Cardiac septum (tissue), 1 donor: ENCODE measurements at regions of chr4 and their contacts with region 1.

Region 1: DNA sequence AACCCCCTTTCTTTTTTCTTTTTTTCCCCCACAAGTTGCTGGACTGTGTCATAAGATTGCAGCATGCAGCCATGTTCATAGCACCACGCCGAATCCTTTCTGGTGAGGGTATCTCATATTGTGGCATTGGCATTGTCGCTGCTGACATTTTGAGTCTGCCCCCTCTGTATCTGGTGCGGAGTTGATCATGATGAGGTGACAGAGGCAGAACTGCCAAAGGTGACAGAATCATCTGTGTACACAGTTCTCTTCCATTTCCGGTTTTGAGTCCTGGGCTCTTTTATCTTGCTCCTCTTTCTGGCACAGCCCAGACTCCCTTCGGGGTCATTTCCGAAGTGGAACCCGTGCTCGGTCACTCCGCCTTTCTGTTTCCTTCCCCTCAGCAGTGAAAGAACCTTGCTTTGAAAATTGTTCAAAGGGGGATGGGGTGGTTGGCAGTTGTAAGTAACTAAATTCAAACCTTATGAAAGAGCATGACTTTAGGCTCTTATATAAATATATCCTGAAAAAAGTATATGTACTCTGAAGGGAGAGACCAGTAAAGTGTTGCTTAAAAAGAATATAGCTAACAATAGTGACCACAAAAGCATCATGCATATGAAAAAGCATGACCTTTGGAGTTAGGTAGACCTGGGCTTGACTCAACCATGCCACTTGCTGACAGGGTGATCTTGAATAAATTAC is 55.0 kb upstream of the BMP2K start:
- DNase-seq: no peak

Region 2: GRCh38 chr4:77959566-77960338 is 761.4 kb before region 1 on chr4:
- intact Hi-C with region 1: no loop called
- DNase-seq: no peak

Region 3: DNA sequence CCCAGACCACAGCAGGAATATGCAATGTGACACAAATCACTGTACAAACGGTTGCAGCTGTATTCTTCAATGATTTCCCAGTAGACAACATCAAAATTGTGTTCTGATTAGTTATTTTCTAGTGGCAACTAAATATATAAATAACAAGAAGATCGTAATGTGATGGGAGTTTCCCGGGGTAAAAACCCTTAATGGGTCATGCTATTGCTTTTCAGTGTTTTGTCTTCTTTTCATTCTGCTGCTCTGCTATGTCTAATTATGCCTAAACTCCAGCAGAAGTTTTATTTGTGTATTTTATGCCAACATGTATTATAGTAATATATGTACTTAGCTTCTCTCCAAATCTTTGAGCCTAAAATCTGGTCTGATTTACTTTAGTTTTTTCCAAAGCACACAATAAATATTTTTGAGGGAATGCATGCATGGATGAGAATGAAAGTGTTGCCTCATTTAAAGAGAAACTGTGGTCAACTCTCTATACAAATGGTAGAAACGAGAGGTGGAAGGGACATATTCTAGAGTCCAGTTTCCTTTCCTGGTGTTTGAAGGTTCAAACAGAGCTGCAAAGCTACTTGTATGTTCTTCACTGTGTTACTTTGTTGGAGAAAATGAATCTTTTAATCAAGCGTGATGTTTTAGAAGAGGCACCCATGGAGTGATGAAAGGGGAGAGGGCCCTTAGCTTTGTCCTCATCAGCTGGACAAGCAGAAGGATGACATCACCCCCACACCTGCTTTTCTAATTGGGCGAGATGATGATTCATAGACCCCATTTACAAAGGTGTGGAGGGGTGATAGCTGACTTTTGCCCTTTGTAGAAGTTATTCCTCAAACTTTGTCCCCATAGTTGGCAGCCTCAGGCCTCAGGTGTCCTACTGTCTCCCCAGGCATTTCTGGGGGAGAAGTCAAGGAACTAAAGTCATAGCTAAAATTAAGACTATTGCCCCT is 534.3 kb before region 1 on chr4:
- intact Hi-C with region 1: no loop called
- DNase-seq: no peak

Region 4: DNA sequence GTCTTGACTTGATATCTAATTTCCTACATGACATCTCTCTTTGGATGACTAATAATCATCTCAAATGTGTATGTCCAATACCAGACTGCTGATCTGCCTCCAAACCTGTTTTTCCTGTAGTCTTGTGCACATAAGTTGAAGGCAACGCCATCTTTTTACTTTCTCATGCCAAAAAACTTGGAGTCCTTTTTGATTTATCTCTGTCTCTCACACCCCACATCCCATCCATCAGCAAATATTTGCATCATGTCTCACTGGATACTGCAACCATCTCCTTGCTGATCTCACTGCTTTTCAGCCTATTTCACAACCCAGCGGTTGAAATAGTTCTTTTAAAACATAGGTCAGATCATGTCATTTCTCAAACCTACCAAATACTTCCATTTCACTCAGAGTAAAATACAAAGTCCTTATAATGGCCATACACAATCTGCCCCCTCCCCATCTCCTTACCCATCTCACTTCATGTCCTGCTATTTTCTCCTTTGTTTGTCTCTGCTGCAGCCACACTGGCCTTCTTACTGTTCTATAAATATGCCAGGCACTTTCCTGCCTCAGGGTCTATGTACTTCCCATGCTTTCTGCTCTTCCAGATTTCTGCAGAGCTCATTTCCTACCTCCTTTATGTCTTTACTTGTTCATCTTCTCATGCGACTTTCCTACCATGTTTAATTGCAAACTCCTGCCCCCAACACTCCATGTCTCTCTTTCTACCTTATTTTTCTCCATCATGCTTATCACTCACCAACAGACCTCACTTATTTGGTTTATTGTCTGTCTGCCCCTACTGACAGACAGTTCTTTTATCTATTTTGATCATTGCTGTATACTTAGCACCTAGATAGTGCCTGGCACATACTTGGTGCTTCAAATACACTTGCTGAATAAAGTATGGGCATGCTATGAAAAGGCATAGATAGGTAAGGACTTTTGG is 70.8 kb before region 1 on chr4:
- intact Hi-C with region 1: loop called (anchors 5 kb)
- DNase-seq: no peak